ENCODE measurements at regions of chr1 and their contacts with region 1.

Region 1: DNA sequence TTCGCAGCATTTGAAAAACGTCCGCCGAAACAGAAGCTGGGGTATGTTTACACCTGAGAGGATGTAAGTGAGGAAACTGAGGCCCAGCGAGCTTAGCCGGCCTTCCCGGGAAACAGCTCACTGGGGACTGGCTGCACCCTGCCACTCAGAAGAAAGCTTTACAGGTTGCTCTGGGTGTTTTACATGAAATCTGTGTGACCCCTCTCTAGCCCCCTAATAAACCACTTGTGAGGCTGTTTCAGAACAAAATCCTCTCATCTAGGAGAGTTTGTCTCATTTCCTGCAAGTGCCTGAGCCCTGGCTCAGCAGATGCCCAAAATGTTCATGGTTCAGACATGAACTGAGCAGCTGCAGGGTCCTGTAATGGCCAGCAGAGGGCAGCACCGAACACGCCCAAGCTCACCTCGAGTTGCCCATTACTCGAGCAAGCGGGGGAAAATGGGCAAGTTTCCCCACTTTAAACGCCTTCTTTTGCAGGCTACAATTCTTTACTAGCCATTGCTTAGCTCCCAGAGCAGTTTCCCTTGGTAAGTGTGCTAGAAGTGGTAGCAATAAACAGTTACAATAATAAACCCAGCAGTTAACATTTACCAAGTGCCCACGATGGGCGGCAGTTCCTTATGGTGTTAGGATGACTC is 76.4 kb downstream of the FHAD1 start:
- DNase-seq: peak; percentile 83
- H3K4me3 Mint-ChIP-seq: no peak overlapping the region
- H3K27ac Mint-ChIP-seq: no peak overlapping the region
- H3K4me1 Mint-ChIP-seq: no peaks in the 10 kb centered on the region
- H3K27me3 Mint-ChIP-seq: peaks cover 53% of the 10 kb centered on the region

Region 2: DNA sequence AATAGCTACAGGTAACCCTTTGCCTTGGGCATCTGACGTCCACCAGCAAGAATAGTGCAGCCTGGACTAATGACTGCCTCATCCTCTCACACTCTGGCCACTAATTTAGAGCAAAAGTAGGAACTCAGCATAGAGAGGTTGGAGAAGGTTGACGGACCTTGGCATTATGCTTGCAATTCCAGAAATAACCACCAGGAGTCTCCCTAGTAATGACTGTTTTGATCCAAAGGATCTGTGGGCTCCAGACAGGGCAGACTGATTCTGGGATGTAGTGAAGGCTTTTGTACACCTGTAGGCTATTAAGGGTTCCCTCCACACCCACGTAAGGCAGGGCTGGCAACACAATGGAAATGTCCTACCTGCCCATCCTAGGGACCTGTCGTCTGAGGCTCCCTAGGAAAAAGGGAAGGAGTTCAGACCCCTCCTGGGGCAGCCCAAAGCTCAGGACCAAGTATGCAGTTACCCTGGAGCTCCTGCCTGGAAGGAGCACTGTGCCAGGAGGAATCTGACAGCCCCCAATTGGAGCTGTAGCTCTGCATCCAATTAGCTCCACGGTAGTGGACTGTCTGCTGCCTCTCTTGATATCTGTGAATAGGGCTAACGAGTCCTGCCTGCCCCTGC is 260.9 kb before region 1 on chr1:
- CTCF ChIA-PET with region 1: no interaction called
- DNase-seq: no peak
- H3K4me3 Mint-ChIP-seq: no peak overlapping the region
- H3K27ac Mint-ChIP-seq: no peak overlapping the region
- H3K4me1 Mint-ChIP-seq: no peaks in the 10 kb centered on the region
- H3K27me3 Mint-ChIP-seq: no peaks in the 10 kb centered on the region

Region 3: GRCh38 chr1:15261155-15262002 is 62.1 kb before region 1 on chr1:
- CTCF ChIA-PET with region 1: no interaction called
- DNase-seq: peak; percentile 28
- H3K4me3 Mint-ChIP-seq: peak overlapping the region; percentile 0
- H3K27ac Mint-ChIP-seq: no peak overlapping the region
- H3K4me1 Mint-ChIP-seq: peaks cover 19% of the 10 kb centered on the region
- H3K27me3 Mint-ChIP-seq: peaks cover 72% of the 10 kb centered on the region

Region 4: GRCh38 chr1:15406609-15407559 is 83.4 kb after region 1 on chr1:
- CTCF ChIA-PET with region 1: interaction called, 11 read pairs
- DNase-seq: no peak
- H3K4me3 Mint-ChIP-seq: no peak overlapping the region
- H3K27ac Mint-ChIP-seq: no peak overlapping the region
- H3K4me1 Mint-ChIP-seq: peaks cover 19% of the 10 kb centered on the region
- H3K27me3 Mint-ChIP-seq: peaks cover 58% of the 10 kb centered on the region

Region 5: DNA sequence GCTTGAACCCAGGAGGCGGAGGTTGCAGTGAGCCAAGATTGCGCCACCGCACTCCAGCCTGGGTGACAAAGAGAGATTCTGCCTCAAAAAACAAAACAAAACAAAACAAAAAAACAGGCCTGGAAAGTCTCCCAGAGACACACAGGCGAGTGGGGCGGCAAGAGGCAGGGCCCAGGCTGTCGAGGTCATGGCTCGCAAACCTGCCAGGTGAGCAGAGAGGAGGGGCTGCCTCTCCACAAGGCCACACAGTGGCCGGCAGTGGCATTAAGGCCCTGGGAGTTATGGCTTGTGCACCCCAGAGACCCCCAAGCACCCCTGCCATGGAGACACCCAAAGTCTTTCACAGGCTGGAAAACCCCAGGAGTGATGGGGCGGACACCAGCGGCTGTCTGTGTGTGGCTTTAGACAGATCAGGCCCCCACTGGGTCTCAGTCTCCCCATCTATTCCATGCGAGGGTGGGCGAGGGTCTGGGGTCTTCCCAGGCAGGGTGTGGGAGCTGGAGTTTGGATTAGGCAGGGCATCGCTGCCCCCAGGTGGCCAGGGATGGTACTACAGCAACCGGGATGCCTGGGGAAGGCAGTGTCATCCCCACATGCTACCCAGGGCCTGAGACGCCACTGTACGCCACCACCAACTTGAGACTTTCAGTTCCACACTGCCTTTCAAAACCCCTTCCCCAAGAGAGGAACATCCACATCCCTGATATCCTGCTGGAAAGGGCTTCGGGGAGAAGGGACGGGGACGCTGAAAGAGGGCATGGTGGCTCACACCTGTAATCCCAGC is 107.5 kb after region 1 on chr1:
- CTCF ChIA-PET with region 1: interaction called, 120 read pairs
- DNase-seq: peak; percentile 77
- H3K4me3 Mint-ChIP-seq: no peak overlapping the region
- H3K27ac Mint-ChIP-seq: no peak overlapping the region
- H3K4me1 Mint-ChIP-seq: no peaks in the 10 kb centered on the region
- H3K27me3 Mint-ChIP-seq: no peaks in the 10 kb centered on the region

Measured in activated naive CD4-positive, alpha-beta T cell treated with anti-CD3 and anti-CD28 coated beads, Interleukin-2, amount 10 ng/mL, durations not matched to agents 7 days and 5 days (primary cell).